Naive thymus-derived CD8-positive, alpha-beta T cell (primary cell): ENCODE measurements at regions of chr17 and their contacts with region 1.

Region 1: GRCh38 chr17:81871387-81872230 is 472 bp upstream of the ARHGDIA start:
- DNase-seq: peak; percentile 91 to 98 (median 95)
- ATAC-seq: peak; percentile 41 to 53
- H3K4me3 Mint-ChIP-seq: peak overlapping the region; percentile 83 to 94 (median 87)
- H3K27ac Mint-ChIP-seq: peak overlapping the region; percentile 88 to 98 (median 95)
- H3K4me1 Mint-ChIP-seq: peaks cover 11 to 46% (median 36%) of the 10 kb centered on the region in 4 donors
- H3K27me3 Mint-ChIP-seq: no peaks in the 10 kb centered on the region

Region 2: DNA sequence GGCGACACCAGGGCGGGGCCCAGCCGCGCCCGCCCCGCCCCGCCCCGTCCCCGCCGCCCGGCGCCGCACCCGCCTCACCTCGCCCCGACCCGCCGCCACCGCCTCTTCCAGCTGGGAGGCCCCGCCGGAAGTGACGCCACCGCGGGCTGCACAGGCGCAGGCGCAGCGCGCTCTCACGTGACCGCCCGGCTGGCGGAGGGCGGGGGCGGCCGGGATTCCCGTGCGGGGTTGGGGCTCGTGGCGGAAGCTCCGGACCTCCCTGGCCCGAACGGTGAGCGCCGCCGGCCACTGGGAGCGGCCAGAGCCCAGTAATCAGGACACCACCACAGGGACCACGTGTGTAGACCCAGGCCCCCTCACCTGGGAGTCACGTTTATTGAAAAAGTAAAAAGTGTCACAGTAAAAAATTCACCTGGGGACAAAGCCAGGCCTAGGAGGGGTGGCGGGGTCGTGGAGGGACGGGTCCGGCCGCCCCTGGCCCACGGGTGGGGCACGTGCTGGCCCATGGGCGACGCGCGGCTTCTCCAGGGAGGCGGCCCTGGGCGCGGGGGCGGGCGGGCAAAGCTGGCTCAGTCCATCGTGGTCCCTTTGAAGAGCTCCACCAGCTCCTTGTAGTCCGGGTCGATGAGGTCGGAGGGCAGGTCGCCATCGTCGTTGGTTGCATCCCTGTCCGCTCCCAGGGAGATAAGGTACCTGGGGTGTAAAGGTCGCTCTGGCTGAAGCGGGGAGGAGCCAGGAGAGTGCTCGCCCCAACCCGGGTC is 38.3 kb before region 1 on chr17 and contains the start of gene MCRIP1:
- POLR2A ChIA-PET with region 1: interaction called, 10 read pairs
- DNase-seq: peak; percentile 86 to 95 (median 92)
- ATAC-seq: peak; percentile 83 to 84
- H3K4me3 Mint-ChIP-seq: peak within 1 kb of the TSS; percentile 81 to 96 (median 91)
- H3K27ac Mint-ChIP-seq: peak within 1 kb of the TSS; percentile 86 to 99 (median 95)
- H3K4me1 Mint-ChIP-seq: peaks cover 12 to 31% (median 30%) of the 10 kb centered on the region in 4 donors
- H3K27me3 Mint-ChIP-seq: peaks cover 0 to 2% (median 0%) of the 10 kb centered on the region in 5 donors
- polyA plus RNA-seq, gene MCRIP1: 49.5 to 61.8 (median 55.0) TPM

Region 3: GRCh38 chr17:81884520-81884919 is 12.9 kb after region 1 on chr17:
- POLR2A ChIA-PET with region 1: interaction called, 71 read pairs
- DNase-seq: no peak
- ATAC-seq: peak in 1 of 2 donors; percentile 43
- H3K4me3 Mint-ChIP-seq: no peak overlapping the region
- H3K27ac Mint-ChIP-seq: peak overlapping the region in 1 of 10 donors; percentile 63
- H3K4me1 Mint-ChIP-seq: peaks cover 11 to 15% (median 13%) of the 10 kb centered on the region in 4 donors
- H3K27me3 Mint-ChIP-seq: no peaks in the 10 kb centered on the region

Region 4: GRCh38 chr17:81911277-81911961 is 39.8 kb after region 1 on chr17 and contains the start of gene PCYT2:
- POLR2A ChIA-PET with region 1: interaction called, 35 read pairs
- DNase-seq: peak; percentile 85 to 96 (median 92)
- ATAC-seq: peak; percentile 91 to 96
- H3K4me3 Mint-ChIP-seq: peak within 1 kb of the TSS; percentile 69 to 91 (median 84)
- H3K27ac Mint-ChIP-seq: peak within 1 kb of the TSS in 7 of 10 donors; percentile 39 to 84 (median 71)
- H3K4me1 Mint-ChIP-seq: peaks cover 3 to 26% (median 13%) of the 10 kb centered on the region in 4 donors
- H3K27me3 Mint-ChIP-seq: no peaks in the 10 kb centered on the region
- polyA plus RNA-seq, gene PCYT2: 22.9 to 24.0 (median 23.7) TPM

Region 5: DNA sequence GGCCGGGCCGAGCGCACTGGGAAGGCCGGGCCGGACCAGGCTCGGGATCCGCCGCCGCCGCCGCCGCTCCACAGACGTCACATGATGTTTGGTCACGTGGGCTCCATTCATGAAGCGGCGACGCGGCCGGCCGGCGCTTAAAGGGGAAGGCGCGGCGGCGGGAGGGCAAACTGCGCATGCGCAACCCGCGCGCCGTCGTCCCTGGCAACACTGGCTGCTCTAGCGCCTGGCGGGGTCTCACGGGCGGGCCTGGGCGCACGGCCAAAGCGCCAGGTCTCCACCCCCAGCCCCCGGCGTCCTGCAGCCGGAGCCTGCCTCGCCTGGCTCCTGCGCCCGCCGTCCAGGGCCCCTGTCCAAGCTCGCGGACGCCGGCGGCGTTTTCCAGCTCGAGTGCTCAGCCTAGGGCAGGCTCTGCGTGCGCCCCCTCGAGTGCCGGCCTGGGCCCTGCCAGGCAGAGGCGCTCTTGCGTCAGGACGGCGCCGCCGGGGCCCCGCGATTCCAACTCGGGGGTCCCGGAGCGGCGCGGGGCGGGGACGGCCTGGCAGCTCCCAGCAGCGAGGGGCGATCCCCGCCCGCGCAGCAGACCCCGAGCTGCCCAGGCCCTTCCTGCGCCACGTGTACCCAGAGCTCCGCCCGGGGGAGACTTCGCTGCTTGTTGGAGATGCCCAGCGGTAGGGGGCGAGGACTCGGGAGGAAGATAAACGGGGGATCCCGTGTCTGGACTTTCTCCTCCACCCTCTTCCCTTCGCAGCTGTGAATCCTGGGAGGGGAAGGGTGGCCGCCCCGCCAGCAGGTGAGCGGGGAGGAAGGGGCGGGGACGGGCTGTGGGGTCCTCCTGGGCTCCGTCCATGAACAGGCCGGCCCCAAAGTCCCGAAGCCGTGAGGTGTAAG is 56.3 kb after region 1 on chr17 and contains the start of gene MAFG:
- POLR2A ChIA-PET with region 1: interaction called, 22 read pairs
- DNase-seq: peak; percentile 82 to 94 (median 90)
- ATAC-seq: peak; percentile 78 to 79
- H3K4me3 Mint-ChIP-seq: peak within 1 kb of the TSS; percentile 75 to 88 (median 80)
- H3K27ac Mint-ChIP-seq: peak within 1 kb of the TSS; percentile 53 to 85 (median 83)
- H3K4me1 Mint-ChIP-seq: peaks cover 6 to 29% (median 15%) of the 10 kb centered on the region in 4 donors
- H3K27me3 Mint-ChIP-seq: peaks cover 0 to 19% (median 5%) of the 10 kb centered on the region in 5 donors
- polyA plus RNA-seq, gene MAFG: 1.2 to 2.5 (median 2.2) TPM